ENCODE measurements at regions of chr4 and their contacts with region 1.

Region 1: DNA sequence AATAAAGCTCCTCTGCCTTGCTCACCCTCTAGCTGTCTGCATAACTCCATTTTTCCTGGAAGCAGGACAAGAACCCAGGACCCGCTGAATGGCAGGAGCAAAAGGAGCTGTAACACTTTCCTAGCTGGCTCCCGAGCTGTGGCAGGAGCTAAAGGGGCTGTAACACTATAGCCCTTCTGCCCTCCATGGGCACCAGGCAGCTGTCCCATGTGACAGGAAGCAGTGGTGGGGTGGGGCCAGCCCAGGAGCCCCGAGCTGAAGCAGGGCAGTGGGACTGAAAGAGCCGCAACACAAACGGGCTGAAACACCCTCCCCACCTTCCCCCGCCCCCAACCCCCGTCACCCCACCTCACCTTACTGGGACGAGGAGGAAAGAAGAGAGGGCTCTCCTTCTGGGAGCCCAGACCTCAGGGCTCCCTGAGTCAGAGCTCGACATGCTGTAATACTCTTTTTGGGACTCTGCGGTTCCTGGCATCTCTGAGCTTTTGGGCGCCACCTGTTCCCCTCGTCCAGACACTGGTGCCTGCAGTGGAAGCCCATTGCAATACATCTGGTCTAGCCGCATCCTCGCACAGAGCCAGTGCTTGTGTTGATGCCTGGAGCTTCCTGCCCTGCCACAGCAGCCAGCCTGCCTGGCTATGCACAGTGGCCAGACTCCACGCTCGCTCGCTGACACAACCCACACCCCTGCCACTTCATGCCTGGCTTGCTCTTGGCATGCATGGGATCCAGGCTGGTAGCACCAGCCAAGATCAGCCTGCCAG is 39.4 kb downstream of the PPM1K start:
- DNase-seq: peak; percentile 55

Region 2: GRCh38 chr4:88352062-88352740 is 107.2 kb after region 1 on chr4:
- in situ Hi-C with region 1: loop called (anchors 25 kb)
- DNase-seq: no peak

Measured in G401 (cell line).